A673 (cell line): ENCODE measurements at regions of chr17 and their contacts with region 1.

Region 1: DNA sequence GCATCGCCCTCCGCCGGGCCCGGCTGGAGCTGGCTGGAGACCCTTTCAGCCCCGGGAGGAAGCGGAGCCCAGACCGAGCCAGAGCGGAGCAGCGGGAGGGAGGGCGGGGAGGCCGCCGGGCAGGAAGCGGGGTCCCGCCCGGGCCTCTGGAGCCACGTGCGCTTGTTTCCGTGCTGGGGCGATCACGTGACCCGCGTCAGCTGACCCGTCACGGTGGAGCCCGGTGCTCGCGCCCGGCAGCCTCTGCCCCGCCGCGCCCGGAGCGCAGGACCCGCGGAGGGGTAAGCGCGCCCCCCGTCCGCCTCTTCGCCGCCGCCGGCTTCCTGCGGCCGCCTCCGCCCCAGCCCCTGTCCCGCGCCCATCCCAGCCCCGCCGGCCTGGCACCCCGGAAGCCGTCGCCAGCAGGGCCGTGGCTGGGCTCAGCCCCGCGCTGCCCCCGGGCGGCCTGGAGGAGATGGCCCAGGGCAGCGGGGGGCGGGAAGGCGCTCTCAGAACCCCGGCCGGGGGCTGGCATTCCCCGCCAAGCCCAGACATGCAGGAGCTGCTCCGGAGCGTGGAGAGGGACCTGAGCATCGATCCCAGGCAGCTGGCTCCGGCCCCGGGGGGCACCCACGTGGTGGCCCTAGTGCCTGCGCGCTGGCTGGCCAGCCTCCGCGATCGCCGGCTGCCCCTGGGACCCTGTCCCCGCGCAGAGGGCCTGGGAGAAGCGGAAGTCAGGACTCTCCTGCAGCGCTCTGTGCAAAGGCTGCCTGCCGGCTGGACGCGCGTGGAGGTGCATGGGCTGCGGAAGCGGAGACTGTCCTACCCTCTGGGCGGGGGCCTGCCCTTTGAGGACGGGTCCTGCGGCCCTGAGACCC is at the start of gene WDR81:
- DNase-seq: peak; percentile 89
- H3K4me3 ChIP-seq: peak within 1 kb of the TSS; percentile 71
- H3K27ac ChIP-seq: peak within 1 kb of the TSS; percentile 65
- H3K4me1 ChIP-seq: peaks cover 3% of the 10 kb centered on the region
- H3K27me3 ChIP-seq: no peaks in the 10 kb centered on the region
- CTCF ChIP-seq: no peak
- total RNA-seq, gene WDR81: 18.6 and 19.4 TPM in 2 replicates

Region 2: DNA sequence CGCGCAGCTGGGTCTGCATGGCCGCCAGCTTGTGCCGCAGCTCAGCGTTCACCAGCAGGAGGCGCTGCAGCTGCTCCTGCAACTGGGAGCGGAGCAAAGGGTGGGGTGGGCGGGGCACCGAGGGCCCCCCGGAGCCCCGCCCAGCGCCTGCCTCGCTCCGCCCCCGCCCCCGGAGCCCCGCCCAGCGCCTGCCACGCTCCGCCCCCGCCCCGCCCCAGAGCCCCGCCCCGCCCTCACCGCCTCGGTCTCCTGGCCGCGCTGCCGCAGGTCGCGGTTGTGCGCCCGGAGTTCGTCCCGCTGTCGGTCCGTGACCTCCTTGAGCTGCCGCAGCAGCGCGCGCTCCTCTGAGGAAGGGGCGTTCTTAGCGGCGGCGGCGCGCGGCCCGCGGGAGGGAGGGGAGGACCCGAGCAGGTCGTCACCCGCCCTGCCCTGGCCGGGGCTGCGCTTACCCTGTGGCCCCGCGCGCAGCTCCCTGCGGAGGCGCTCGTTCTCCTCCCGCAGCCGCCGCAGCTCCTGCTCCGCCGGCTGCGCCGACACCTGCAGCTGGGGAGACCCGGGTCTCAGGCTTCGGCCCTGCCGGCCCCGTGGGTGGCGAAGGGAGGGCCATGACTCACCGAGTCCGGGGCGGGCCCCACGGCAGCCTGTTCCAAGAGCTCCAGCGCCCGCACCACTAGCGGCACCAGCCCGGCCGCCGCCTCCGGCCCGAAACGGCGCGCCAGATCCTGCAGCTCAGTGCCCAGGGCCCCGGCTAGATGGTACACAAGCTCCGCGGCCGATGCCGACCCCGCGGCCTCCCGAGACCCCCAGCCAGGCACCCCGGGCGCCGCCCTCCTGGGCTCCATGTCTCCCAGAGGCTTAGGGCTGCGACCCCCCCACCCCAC is 75.5 kb before region 1 on chr17:
- CTCF ChIA-PET with region 1: no interaction called
- POLR2A ChIA-PET with region 1: no interaction called
- intact Hi-C with region 1: no loop called
- DNase-seq: peak; percentile 95
- H3K4me3 ChIP-seq: peak overlapping the region; percentile 60
- H3K27ac ChIP-seq: no peak overlapping the region
- H3K4me1 ChIP-seq: peaks cover 12% of the 10 kb centered on the region
- H3K27me3 ChIP-seq: no peaks in the 10 kb centered on the region
- CTCF ChIP-seq: peak; percentile 77; the same call in 1 of the 2 replicates

Region 3: GRCh38 chr17:1764284-1764683 is 39.5 kb after region 1 on chr17:
- CTCF ChIA-PET with region 1: no interaction called
- POLR2A ChIA-PET with region 1: no interaction called
- intact Hi-C with region 1: loop called (anchors 5 kb)
- DNase-seq: no peak
- H3K4me3 ChIP-seq: no peak overlapping the region
- H3K27ac ChIP-seq: peak overlapping the region; percentile 37
- H3K4me1 ChIP-seq: peaks cover 26% of the 10 kb centered on the region
- H3K27me3 ChIP-seq: no peaks in the 10 kb centered on the region
- CTCF ChIP-seq: no peak

Region 4: DNA sequence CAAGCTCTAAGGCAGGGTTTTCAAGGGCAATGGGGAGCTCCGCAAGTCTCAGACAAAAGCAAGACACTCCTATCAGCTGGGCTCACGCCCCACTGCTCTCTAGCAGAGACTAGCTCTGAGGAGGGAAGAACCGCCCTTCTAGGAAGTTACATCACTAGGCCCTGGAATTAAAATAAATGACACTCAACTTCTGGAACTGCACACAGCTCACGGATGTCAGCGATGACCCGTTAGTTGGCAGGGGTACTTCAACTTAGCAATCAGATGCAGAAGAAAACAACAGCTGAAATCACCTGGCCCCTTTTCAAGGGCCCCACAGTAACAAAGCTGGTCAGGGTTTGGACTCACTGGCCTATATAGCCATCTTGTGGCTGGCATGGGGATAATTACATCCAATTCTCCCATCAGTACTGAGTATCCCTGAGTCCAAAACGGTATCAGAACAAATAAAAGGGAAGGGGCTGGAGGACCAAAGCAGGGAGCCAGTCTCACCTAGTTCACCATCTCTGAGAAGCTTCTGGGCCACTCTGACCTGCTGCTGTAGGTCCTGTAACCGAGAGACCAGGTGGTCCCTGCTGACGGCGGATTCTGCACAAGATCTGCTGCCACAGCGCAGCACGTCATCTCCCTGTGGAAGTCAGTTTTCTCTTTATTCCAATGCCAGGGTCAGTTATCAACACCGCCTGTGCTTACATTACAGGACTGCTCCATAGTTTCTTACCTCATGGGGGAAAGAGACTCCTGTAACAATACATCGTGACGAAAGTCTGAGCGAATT is 59.3 kb after region 1 on chr17:
- CTCF ChIA-PET with region 1: interaction called, 10 read pairs
- POLR2A ChIA-PET with region 1: interaction called, 8 read pairs
- intact Hi-C with region 1: loop called (anchors 1 kb)
- DNase-seq: peak; percentile 57
- H3K4me3 ChIP-seq: no peak overlapping the region
- H3K27ac ChIP-seq: peak overlapping the region; percentile 46
- H3K4me1 ChIP-seq: peaks cover 26% of the 10 kb centered on the region
- H3K27me3 ChIP-seq: no peaks in the 10 kb centered on the region
- CTCF ChIP-seq: peak; percentile 67